PC-3 (cell line): ENCODE measurements at regions of chr16 and their contacts with region 1.

Region 1: DNA sequence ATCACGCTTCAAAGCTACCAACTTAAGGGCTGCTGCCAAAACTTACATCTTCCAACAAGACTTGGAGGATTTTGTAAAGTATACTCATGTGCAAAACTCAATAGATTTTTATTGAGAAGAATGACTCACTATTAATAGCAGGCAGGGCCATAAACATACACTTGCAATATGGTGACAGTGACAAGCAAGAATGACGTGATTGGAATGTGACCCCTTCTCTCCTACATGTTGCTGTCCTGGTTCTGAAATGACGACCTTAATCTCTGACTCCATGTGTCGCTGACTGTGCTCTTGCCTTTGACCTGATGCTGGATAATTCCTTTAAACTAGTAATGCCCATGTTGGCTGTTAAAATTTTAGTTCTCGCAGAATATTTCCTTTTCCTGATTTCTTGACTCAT is 174.5 kb downstream of the PARN start:
- DNase-seq: peak; percentile 73
- ATAC-seq: peak; percentile 94
- H3K4me3 ChIP-seq: no peak overlapping the region
- H3K27ac ChIP-seq: peak overlapping the region; percentile 8; the same call in 1 of the 2 replicates
- H3K4me1 ChIP-seq: peaks cover 19% of the 10 kb centered on the region
- H3K27me3 ChIP-seq: no peaks in the 10 kb centered on the region
- CTCF ChIP-seq: no peak

Region 2: GRCh38 chr16:14501331-14502255 is 46.0 kb after region 1 on chr16:
- CTCF ChIA-PET with region 1: no interaction called
- POLR2A ChIA-PET with region 1: no interaction called
- intact Hi-C with region 1: loop called (anchors 10 kb)
- DNase-seq: peak; percentile 87
- ATAC-seq: peak; percentile 78
- H3K4me3 ChIP-seq: no peak overlapping the region
- H3K27ac ChIP-seq: peak overlapping the region; percentile 92
- H3K4me1 ChIP-seq: peaks cover 74% of the 10 kb centered on the region
- H3K27me3 ChIP-seq: no peaks in the 10 kb centered on the region
- CTCF ChIP-seq: no peak

Region 3: DNA sequence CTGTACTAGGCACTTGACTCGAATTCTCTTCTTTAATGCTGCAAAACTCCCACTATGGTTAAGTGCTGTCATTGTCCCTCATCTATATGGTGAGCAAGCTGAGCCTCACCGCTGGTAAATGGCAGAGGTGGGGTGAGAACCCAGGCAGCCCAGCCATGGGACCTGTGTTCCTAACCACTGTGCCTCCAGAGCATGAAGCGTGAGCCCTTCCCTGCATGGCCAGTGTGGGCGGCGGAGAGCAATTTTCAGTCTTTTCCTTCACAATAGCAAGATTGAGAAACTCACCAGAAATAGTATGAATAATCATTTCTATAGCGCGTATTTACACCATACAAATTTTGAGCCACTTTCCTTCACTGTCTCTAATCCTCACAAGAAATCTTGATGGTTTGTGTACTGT is 186.3 kb after region 1 on chr16:
- CTCF ChIA-PET with region 1: no interaction called
- POLR2A ChIA-PET with region 1: no interaction called
- intact Hi-C with region 1: no loop called
- DNase-seq: no peak
- ATAC-seq: no peak
- H3K4me3 ChIP-seq: no peak overlapping the region
- H3K27ac ChIP-seq: no peak overlapping the region
- H3K4me1 ChIP-seq: no peaks in the 10 kb centered on the region
- H3K27me3 ChIP-seq: no peaks in the 10 kb centered on the region
- CTCF ChIP-seq: no peak

Region 4: DNA sequence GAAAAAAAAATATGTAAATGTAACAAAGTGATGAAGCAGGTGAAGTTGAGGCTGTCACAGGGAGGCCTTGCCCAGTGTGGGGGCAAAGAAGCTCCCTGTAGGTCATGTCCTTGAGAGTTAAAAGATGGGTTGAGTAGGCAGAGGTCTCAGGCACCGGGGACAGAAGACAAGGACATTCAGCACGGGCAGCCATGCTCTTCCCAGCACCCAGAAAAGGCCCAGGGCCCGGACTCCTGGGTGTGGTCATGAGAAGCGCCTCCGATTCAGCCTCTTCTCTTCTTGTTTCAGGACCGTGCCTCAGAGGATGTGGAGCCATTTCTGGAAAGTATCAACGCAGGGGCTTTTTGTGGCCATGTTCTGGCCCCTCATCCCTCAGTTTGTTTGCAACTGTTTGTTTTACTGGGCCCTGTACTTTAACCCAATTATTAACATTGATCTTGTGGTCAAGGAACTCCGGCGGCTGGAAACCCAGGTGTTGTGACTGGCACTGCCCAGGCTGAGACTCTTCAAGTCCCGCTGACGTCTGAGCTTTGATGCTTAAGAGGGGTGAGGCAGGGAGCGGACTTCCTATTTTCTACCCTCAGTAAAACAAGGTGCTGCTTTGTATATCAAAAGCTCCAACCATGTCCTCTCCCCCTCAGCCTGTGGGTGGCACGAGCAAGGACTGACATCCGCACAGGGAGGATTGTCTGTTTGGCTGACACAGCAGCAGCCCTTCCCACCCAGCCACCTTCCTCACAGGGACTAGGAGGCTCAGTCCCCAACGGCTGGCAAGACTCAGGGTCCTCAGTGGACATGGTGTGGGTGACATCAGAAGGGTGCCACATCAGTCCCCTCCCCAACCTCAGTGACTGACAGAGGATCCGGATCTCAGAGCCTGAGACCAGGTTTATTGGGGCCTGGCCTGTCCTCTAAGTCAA is 212.0 kb after region 1 on chr16:
- CTCF ChIA-PET with region 1: no interaction called
- POLR2A ChIA-PET with region 1: no interaction called
- intact Hi-C with region 1: no loop called
- DNase-seq: no peak
- ATAC-seq: no peak
- H3K4me3 ChIP-seq: no peak overlapping the region
- H3K27ac ChIP-seq: no peak overlapping the region
- H3K4me1 ChIP-seq: no peaks in the 10 kb centered on the region
- H3K27me3 ChIP-seq: no peaks in the 10 kb centered on the region
- CTCF ChIP-seq: no peak